AG04449 (cell line): ENCODE measurements at regions of chr22 and their contacts with region 1.

Region 1: GRCh38 chr22:26452236-26453016 is 23.4 kb downstream of the ASPHD2 start:
- DNase-seq: no peak
- H3K4me3 ChIP-seq: no peak overlapping the region
- CTCF ChIP-seq: no peak

Region 2: GRCh38 chr22:26398741-26399153 is 53.7 kb before region 1 on chr22:
- CTCF ChIA-PET with region 1: interaction called, 14 read pairs
- POLR2A ChIA-PET with region 1: no interaction called
- DNase-seq: peak; percentile 23
- H3K4me3 ChIP-seq: no peak overlapping the region
- CTCF ChIP-seq: peak; percentile 75